ENCODE measurements at regions of chr7 and their contacts with region 1.

Region 1: DNA sequence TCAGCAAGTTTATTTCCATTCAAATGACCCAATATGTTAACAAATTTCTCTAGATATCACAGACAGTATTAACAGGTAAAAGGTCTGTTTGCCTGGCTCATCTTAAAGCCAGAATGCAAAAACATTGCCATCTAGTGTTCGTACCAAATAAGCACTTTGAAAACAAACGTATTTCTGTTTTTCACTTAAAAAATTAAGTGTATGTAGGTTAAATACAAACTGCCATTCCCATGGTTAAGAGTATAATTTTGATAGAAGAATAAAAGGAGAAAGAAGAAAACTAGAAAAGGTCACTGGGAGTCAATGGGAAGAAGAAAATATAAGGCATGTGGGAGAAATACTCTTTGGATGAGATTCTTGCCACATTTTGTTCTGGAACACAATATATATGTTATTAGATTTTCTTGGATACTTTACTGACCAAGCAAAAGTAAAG is 51.0 kb downstream of the ORC5 start:
- DNase-seq: peak; percentile 6
- H3K4me3 ChIP-seq: no peak overlapping the region
- H3K27ac ChIP-seq: no peak overlapping the region
- H3K4me1 ChIP-seq: no peaks in the 10 kb centered on the region
- H3K27me3 ChIP-seq: no peaks in the 10 kb centered on the region
- CTCF ChIP-seq: peak; percentile 46 to 62

Region 2: DNA sequence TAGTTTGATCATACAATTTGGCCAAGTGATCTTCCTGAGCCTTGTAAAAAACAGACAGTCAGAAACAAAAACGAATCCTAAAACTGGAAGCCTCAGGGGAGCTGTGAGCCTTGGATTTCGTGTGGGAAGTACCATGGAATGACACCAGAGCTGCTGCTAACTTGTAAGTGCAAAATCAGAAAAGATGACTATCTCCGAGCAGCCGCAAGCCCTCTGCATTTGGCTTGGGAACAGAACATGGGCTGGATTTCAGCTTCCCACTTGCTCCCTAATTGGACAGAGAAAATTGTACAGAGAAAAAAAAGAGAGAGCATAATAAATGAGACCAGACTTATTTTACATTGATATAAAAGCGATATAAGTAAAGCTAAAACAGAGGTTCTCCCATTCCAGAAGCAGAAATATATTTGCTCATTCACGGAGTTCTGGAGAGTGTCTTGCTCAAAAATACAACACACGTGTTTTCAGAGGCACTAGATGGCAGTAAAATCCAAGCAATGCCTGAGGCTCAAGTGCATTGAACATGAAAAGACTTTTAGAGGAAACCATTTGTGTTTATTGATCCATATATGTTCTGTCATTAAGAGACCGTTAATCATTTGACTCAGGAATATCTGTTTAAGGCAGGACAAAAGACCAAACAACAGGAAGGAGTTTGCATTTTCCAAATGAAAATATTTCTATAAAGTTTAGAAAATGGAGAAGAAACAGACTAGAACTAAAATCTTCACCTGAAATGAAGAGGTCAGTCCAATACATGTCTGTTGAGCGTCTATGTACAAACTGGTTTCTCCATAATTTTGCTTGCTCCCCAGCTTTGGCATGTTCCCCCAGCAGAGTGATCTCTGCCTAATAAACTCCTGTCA is 632.6 kb before region 1 on chr7:
- CTCF ChIA-PET with region 1: no interaction called
- dilution Hi-C with region 1: no loop called
- in situ Hi-C with region 1: no loop called
- intact Hi-C with region 1: loop called (anchors 5 kb)
- DNase-seq: peak; percentile 17
- H3K4me3 ChIP-seq: no peak overlapping the region
- H3K27ac ChIP-seq: no peak overlapping the region
- H3K4me1 ChIP-seq: no peaks in the 10 kb centered on the region
- H3K27me3 ChIP-seq: no peaks in the 10 kb centered on the region
- CTCF ChIP-seq: peak; percentile 32 to 50

Region 3: DNA sequence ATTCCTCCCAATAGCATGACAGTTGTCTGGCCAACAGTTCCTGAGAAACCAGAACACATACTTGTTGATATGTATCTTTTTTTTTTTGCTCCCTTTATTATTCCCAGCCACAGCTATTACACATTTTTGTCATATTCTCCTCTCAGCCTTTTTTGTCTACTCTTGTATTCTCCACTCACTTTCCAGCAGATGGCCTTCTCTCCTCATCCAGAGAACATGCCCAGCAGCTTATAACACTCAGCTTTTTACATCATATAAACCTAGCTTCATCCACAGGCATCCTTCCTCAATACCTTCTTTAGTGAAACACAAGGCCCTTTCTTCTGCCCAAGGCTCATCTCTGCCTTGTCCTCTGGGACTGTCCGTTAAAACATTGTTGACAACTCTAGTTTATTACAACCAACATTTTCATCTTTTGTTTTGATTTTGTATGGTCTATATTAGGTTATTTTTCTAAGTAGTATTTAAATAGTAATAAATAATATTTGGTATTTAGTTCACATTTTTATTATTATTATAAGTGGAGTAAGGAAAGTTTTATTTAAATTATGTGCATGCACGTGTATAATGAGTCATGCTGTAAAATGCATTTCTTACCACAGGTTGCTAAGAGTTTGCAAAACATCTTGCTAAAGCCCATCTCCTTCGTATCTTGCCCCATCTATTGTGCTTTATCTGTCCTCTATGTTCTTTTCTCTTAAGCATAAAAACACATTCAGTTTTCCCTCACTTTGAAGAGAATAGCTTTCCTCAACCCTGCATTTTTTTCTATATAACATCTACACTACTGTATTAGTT is 50.6 kb before region 1 on chr7:
- CTCF ChIA-PET with region 1: no interaction called
- dilution Hi-C with region 1: no loop called
- in situ Hi-C with region 1: no loop called
- intact Hi-C with region 1: loop called (anchors 1 kb)
- DNase-seq: peak; percentile 6
- H3K4me3 ChIP-seq: no peak overlapping the region
- H3K27ac ChIP-seq: no peak overlapping the region
- H3K4me1 ChIP-seq: no peaks in the 10 kb centered on the region
- H3K27me3 ChIP-seq: no peaks in the 10 kb centered on the region
- CTCF ChIP-seq: peak in 1 of 2 donors; percentile 11

Measured in mammary epithelial cell (primary cell).